ENCODE measurements at regions of chr1 and their contacts with region 1.

Region 1: DNA sequence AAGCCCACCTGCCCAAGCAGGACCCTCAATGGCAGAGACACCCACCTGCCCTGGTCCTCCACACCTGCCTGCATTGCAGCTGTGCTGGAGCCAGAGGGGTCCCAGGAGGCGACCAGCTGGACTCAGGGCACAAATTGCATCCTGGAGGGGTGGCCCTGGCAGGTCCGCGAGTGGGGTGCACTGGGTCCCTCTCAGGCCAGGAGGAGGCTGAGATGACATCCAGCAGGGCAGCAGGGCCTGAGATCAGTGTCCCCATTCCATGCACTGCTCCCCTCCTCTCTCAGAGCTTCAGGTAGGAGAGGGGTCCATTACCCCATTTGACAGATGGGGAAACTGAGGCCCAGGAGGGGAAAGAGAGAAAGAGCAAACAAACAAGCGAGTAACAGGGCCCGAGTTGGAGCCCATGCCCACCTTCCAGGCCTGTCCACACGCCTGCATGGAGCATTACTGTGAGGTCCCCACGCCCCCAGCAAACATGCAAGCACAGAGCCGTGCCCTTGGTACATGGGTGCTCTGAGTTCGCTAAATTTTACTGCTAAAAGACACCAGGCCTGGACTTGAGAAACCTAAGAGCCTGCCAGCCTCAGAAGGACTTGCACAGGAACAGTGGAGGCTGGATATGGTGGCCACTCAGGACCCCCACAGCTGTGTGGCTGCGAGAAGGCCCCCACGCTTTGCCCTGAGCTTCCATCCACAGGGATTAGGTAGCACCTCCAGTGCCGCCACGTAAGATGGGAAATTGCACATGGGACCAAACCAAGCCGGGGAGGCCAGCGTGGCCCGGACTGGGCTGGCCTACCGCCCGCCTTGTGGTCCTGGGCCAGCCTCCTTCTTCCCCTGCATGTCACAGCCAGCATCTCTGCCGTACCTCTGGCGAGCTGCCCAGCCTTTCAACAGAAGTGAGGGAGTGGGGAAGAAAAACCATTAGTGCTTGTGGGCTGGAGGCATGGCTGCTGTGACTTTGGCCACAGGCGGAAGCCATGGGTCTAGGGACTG is 7.4 kb downstream of the WNT3A start:
- DNase-seq: peak; percentile 38

Region 2: DNA sequence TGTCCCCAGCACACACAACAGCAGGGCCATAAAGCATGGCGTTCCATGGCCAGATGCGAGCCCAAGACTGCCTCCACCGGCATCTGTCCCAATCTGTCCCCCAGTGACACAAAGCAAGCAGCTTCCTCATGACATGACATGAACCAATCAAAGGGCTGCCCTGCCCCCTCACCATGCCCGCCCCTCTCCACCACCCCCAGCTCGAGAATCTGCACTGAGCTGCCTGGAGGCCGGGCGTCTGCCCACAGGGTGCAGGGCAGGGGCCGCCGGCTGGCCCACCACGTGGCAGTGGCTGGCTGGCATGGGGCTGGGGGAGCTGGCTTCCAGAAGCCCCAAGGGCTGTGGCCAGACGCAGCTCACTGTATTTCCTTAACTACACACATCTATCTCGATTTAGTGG is 94.3 kb before region 1 on chr1:
- in situ Hi-C with region 1: no loop called
- DNase-seq: no peak

Region 3: GRCh38 chr1:228058172-228058948 is 44.1 kb after region 1 on chr1:
- in situ Hi-C with region 1: no loop called
- DNase-seq: no peak

Region 4: GRCh38 chr1:228073857-228074545 is 59.8 kb after region 1 on chr1:
- in situ Hi-C with region 1: loop called (anchors 10 kb)
- DNase-seq: peak; percentile 53